T-cell (primary cell): ENCODE measurements at regions of chr11 and their contacts with region 1.

Region 1: GRCh38 chr11:38345289-38345804 is 1747.3 kb upstream of the RAG2 start:
- DNase-seq: no peak
- ATAC-seq: no peak
- H3K4me3 ChIP-seq: no peak overlapping the region
- H3K4me3 Mint-ChIP-seq: no peak overlapping the region
- H3K27ac ChIP-seq: no peak overlapping the region
- H3K27ac Mint-ChIP-seq: no peak overlapping the region
- H3K4me1 ChIP-seq: no peaks in the 10 kb centered on the region
- H3K4me1 Mint-ChIP-seq: no peaks in the 10 kb centered on the region
- H3K27me3 ChIP-seq: no peaks in the 10 kb centered on the region
- H3K27me3 Mint-ChIP-seq: no peaks in the 10 kb centered on the region

Region 2: DNA sequence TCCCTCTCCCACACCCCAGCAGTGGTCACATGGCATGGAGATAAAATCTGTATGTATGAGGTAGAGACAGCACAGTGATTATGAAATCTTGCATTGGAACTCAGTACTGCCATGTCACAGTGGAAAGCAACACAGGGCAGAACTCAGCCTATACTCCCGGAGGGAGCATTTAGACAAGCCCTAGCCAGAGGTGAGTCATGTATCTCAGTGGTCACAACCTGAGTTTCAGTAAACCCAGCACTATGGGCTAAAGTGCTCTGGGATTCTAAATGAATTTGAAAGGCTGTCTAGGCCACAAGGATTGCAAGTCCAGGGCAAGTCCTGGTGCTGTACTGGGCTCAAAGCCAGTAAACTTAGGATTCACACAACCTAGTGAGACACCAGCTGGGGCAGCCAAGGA is 30.2 kb before region 1 on chr11:
- CTCF ChIA-PET with region 1: no interaction called
- POLR2A ChIA-PET with region 1: no interaction called
- DNase-seq: no peak
- ATAC-seq: no peak
- H3K4me3 ChIP-seq: no peak overlapping the region
- H3K4me3 Mint-ChIP-seq: no peak overlapping the region
- H3K27ac ChIP-seq: no peak overlapping the region
- H3K27ac Mint-ChIP-seq: no peak overlapping the region
- H3K4me1 ChIP-seq: no peaks in the 10 kb centered on the region
- H3K4me1 Mint-ChIP-seq: no peaks in the 10 kb centered on the region
- H3K27me3 ChIP-seq: no peaks in the 10 kb centered on the region
- H3K27me3 Mint-ChIP-seq: no peaks in the 10 kb centered on the region

Region 3: DNA sequence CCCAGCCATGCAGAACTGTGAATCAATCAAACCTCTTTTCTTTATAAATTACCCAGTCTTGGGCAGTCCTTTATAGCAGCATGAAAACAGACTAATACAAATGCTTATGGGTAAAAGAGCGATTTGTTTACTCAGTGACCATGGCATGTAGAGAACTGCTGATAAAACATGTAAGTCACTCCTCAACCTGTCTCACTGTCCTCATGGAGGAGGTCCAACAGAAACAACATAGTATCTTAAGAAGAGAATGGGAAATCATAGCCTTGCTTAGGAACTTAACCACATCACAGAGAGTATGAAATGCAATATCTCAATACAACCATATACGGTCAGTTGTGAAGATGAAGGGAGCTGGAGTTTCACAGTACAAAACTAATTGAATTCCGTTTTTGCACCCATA is 13.3 kb before region 1 on chr11:
- CTCF ChIA-PET with region 1: interaction called in 1 of 2 experiments, 11 read pairs
- POLR2A ChIA-PET with region 1: no interaction called
- DNase-seq: no peak
- ATAC-seq: no peak
- H3K4me3 ChIP-seq: no peak overlapping the region
- H3K4me3 Mint-ChIP-seq: no peak overlapping the region
- H3K27ac ChIP-seq: no peak overlapping the region
- H3K27ac Mint-ChIP-seq: no peak overlapping the region
- H3K4me1 ChIP-seq: no peaks in the 10 kb centered on the region
- H3K4me1 Mint-ChIP-seq: no peaks in the 10 kb centered on the region
- H3K27me3 ChIP-seq: no peaks in the 10 kb centered on the region
- H3K27me3 Mint-ChIP-seq: no peaks in the 10 kb centered on the region